ENCODE measurements at regions of chr18 and their contacts with region 1.

Region 1: GRCh38 chr18:27645929-27646328 is 460.8 kb upstream of the CHST9 start:
- DNase-seq: no peak
- ATAC-seq: no peak
- H3K4me3 ChIP-seq: no peak overlapping the region
- H3K27ac ChIP-seq: no peak overlapping the region
- H3K4me1 ChIP-seq: no peaks in the 10 kb centered on the region
- H3K27me3 ChIP-seq: no peaks in the 10 kb centered on the region
- CTCF ChIP-seq: no peak
- POLR2A ChIP-seq: no peak
- RAD21 ChIP-seq: no peak

Region 2: GRCh38 chr18:27582760-27583412 is 63.0 kb before region 1 on chr18:
- CTCF ChIA-PET with region 1: no interaction called
- POLR2A ChIA-PET with region 1: no interaction called
- dilution Hi-C with region 1: no loop called
- in situ Hi-C with region 1: no loop called
- intact Hi-C with region 1: loop called (anchors 10 kb)
- DNase-seq: no peak
- ATAC-seq: no peak
- H3K4me3 ChIP-seq: no peak overlapping the region
- H3K27ac ChIP-seq: no peak overlapping the region
- H3K4me1 ChIP-seq: no peaks in the 10 kb centered on the region
- H3K27me3 ChIP-seq: no peaks in the 10 kb centered on the region
- CTCF ChIP-seq: no peak
- POLR2A ChIP-seq: no peak
- RAD21 ChIP-seq: no peak

Region 3: DNA sequence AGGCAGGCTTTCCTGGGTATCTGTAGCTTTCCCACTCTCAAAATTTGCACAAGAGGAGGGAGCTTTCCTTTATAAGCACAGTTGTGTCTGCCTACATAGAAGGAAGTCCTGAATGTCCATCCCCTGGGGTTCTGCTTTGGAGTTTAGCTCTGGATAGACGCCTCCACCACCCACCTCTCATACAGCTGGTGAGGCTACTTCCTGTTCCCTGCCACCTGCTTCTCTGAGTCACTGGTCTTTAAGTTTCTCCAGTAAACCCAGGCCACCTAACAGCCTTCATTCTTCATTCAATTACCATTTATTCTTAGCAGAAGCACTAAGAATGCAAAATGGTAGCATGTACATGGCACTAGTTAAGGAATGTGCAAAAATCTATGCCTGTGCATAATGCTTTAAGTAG is 123.2 kb after region 1 on chr18:
- CTCF ChIA-PET with region 1: no interaction called
- POLR2A ChIA-PET with region 1: no interaction called
- dilution Hi-C with region 1: no loop called
- in situ Hi-C with region 1: no loop called
- intact Hi-C with region 1: no loop called
- DNase-seq: no peak
- ATAC-seq: no peak
- H3K4me3 ChIP-seq: no peak overlapping the region
- H3K27ac ChIP-seq: no peak overlapping the region
- H3K4me1 ChIP-seq: no peaks in the 10 kb centered on the region
- H3K27me3 ChIP-seq: no peaks in the 10 kb centered on the region; the same call in 1 of the 2 replicates
- CTCF ChIP-seq: no peak
- POLR2A ChIP-seq: no peak
- RAD21 ChIP-seq: no peak